Colonic mucosa (tissue), 4 donors: ENCODE measurements at regions of chr2 and their contacts with region 1.

Region 1: GRCh38 chr2:149330126-149331022 is at the start of gene LYPD6:
- DNase-seq: peak; percentile 79
- H3K4me3 ChIP-seq: peak within 1 kb of the TSS; percentile 73
- H3K27ac ChIP-seq: peak within 1 kb of the TSS; percentile 62
- H3K4me1 ChIP-seq: no peaks in the 10 kb centered on the region
- H3K27me3 ChIP-seq: no peaks in the 10 kb centered on the region
- CTCF ChIP-seq: no peak
- total RNA-seq, gene LYPD6: 5.2 to 8.4 TPM

Region 2: DNA sequence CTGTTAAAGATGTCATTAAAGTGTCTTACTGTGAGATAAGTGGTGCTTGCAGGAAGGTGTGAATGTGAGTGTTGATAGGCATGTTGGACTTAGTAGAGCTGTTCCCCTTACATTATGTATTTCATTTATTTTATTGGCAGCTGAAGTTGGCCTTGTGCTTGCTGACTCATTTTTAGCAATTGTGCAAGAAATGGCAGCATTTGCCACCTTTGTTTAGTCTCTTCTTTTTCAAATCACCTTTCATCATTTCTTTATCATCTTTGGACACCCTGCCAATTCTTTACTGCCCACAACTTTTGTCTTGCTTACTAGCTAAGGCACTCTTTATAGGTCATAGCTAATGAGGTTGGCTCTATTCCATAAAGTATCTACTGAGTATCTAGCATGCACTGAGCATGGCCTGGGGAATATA is 130.3 kb before region 1 on chr2:
- intact Hi-C with region 1: no loop called
- DNase-seq: no peak
- H3K4me3 ChIP-seq: no peak overlapping the region
- H3K27ac ChIP-seq: no peak overlapping the region
- H3K4me1 ChIP-seq: no peaks in the 10 kb centered on the region
- H3K27me3 ChIP-seq: no peaks in the 10 kb centered on the region
- CTCF ChIP-seq: no peak

Region 3: DNA sequence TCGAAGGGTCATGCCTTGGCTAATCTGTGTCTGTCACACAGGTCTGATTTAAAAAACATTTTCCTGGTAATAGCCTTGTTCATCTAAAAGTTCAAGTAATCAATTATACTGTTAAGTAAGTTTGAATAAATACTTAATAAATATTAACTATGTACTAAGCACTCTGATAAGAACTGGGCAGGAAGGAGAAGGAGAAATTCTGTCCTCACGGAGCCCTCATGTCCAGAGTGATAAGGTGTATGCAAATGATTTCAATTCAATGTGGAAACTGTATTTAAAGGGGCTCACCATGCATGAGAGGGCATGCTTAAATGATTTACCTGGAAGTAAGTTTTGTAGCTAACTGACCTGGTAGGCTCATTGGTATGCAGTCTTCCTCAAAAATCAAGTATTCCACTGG is 94.0 kb before region 1 on chr2:
- intact Hi-C with region 1: no loop called
- DNase-seq: no peak
- H3K4me3 ChIP-seq: no peak overlapping the region
- H3K27ac ChIP-seq: no peak overlapping the region
- H3K4me1 ChIP-seq: no peaks in the 10 kb centered on the region
- H3K27me3 ChIP-seq: no peaks in the 10 kb centered on the region
- CTCF ChIP-seq: no peak

Region 4: GRCh38 chr2:149568138-149568537 is 237.8 kb after region 1 on chr2:
- intact Hi-C with region 1: loop called (anchors 5 kb)
- DNase-seq: no peak
- H3K4me3 ChIP-seq: no peak overlapping the region
- H3K27ac ChIP-seq: no peak overlapping the region
- H3K4me1 ChIP-seq: peaks cover 3% of the 10 kb centered on the region
- H3K27me3 ChIP-seq: no peaks in the 10 kb centered on the region
- CTCF ChIP-seq: no peak